K562 (cell line): ENCODE measurements at regions of chr10 and their contacts with region 1.

Region 1: GRCh38 chr10:131885391-131886161 is 15.2 kb upstream of the PPP2R2D start:
- DNase-seq: peak; percentile 76 to 84 (median 78)
- ATAC-seq: peak; percentile 100
- H3K4me3 ChIP-seq: no peak overlapping the region
- H3K27ac ChIP-seq: no peak overlapping the region
- H3K4me1 ChIP-seq: peaks cover 13 to 25% of the 10 kb centered on the region in 2 experiments
- H3K27me3 ChIP-seq: no peaks in the 10 kb centered on the region; a peak in 1 of 5 replicates
- CTCF ChIP-seq: peak; percentile 90 to 97 (median 92)
- EP300 ChIP-seq: no peak
- POLR2A ChIP-seq: no peak
- RAD21 ChIP-seq: peak; percentile 89 to 95

Region 2: GRCh38 chr10:131928248-131929095 is 42.9 kb after region 1 on chr10:
- CTCF ChIA-PET with region 1: no interaction called
- POLR2A ChIA-PET with region 1: no interaction called
- in situ Hi-C with region 1: loop called (anchors 5 kb)
- intact Hi-C with region 1: loop called (anchors 5 kb)
- DNase-seq: peak in 2 of 4 experiments; percentile 37 to 42
- ATAC-seq: peak; percentile 69
- H3K4me3 ChIP-seq: no peak overlapping the region
- H3K27ac ChIP-seq: peak overlapping the region; percentile 60; the same call in 2 of the 3 replicates
- H3K4me1 ChIP-seq: peaks cover 36 to 55% of the 10 kb centered on the region in 2 experiments; a peak in 4 of 5 replicates
- H3K27me3 ChIP-seq: no peaks in the 10 kb centered on the region; a peak in 1 of 5 replicates
- CTCF ChIP-seq: no peak
- EP300 ChIP-seq: no peak
- POLR2A ChIP-seq: no peak
- RAD21 ChIP-seq: no peak

Region 3: DNA sequence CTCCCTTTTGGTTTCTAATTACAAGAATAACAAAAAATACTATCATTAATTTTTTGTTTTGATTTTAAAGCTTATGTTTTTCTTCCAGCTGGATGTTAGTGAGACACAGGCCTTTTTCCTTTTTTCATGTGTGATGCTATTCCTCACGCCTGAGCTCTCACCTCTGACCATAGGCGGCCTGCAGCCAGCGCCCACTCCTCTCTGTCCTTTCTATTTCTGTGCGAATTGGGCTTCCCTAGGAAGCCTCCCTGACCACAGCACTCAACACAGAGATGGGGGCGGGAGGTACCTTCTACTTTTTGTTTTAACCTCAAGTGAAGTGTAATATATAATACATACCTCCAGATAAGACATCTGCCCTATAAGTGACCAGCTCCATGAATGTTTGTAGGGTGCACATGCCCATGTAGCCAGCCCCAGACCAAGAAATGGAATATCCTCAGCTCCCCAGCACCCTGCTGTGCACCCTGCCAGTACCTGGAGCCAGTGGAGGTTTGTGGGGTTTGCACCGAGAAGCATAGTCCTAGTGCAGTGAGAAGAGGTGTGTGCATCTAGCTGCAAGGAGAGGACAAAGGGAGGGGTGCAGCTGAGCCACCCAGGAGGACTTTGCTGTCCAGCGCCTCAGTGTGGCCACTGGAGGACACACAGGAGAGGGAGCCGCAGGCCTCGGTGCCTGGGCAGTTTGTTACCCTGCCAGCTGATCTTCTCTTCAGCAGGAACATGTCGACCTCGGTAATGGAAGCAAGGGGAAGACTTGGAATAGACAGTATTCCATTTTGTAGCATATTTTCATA is 57.6 kb after region 1 on chr10:
- CTCF ChIA-PET with region 1: interaction called, 5 read pairs
- POLR2A ChIA-PET with region 1: interaction called, 3 read pairs
- in situ Hi-C with region 1: no loop called
- intact Hi-C with region 1: loop called (anchors 1 kb)
- DNase-seq: peak; percentile 33 to 60 (median 50)
- ATAC-seq: peak; percentile 98
- H3K4me3 ChIP-seq: no peak overlapping the region
- H3K27ac ChIP-seq: no peak overlapping the region
- H3K4me1 ChIP-seq: no peaks in the 10 kb centered on the region
- H3K27me3 ChIP-seq: no peaks in the 10 kb centered on the region
- CTCF ChIP-seq: peak; percentile 62 to 74 (median 64)
- EP300 ChIP-seq: no peak
- POLR2A ChIP-seq: no peak
- RAD21 ChIP-seq: peak; percentile 24 to 60; a peak in 3 of 4 replicates

Region 4: DNA sequence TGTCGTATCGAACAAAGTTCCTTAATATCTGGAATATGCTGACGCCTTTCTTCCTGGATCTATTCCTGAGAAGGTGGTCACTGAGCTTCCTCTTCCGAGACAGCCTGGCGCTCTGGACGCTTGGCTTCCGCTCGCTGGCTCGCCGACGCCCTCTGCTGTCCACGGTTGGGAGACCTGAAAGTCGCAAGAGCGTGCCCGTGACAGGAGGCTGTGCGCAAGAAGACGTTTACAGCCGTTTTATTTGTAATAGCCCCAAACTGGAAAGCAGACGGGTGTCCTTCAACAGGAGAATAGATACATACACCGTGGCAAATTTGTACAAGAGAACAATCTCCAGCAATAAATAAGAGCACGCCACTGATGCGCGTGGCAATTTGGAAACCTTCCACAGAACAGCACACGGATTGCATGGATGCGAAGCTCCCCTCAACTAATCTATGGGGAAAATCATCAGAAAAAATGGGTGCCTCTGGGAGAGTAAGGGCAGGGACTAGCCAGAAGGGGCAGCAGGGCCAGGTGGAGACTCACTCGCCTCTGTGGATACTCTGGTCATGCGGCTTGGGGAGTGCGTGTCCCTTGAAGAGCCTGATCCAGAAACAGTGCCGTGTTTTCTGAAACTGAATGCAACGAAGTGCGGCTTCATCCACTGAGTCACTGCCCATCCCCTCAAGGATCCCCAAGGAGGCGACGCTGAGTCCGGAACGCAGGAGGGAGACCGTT is 137.7 kb after region 1 on chr10:
- CTCF ChIA-PET with region 1: interaction called, 16 read pairs
- POLR2A ChIA-PET with region 1: interaction called, 5 read pairs
- in situ Hi-C with region 1: loop called (anchors 5 kb)
- intact Hi-C with region 1: loop called (anchors 1 kb)
- DNase-seq: peak; percentile 72 to 84 (median 76)
- ATAC-seq: peak; percentile 96
- H3K4me3 ChIP-seq: peak overlapping the region; percentile 6; the same call in 1 of the 2 replicates
- H3K27ac ChIP-seq: no peak overlapping the region
- H3K4me1 ChIP-seq: peaks cover 7 to 22% of the 10 kb centered on the region in 2 experiments; a peak in 3 of 5 replicates
- H3K27me3 ChIP-seq: peaks cover 16 to 33% of the 10 kb centered on the region in 2 experiments; a peak in 4 of 5 replicates
- CTCF ChIP-seq: peak; percentile 81 to 89 (median 85)
- EP300 ChIP-seq: no peak
- POLR2A ChIP-seq: no peak
- RAD21 ChIP-seq: peak; percentile 76 to 90

Region 5: GRCh38 chr10:132142411-132143161 is 257.0 kb after region 1 on chr10:
- CTCF ChIA-PET with region 1: interaction called, 7 read pairs
- POLR2A ChIA-PET with region 1: no interaction called
- in situ Hi-C with region 1: no loop called
- intact Hi-C with region 1: loop called (anchors 2 kb)
- DNase-seq: peak; percentile 31 to 80 (median 74)
- ATAC-seq: peak; percentile 95
- H3K4me3 ChIP-seq: no peak overlapping the region
- H3K27ac ChIP-seq: no peak overlapping the region
- H3K4me1 ChIP-seq: peaks cover 0 to 5% of the 10 kb centered on the region in 2 experiments; a peak in 2 of 5 replicates
- H3K27me3 ChIP-seq: peaks cover 6 to 61% of the 10 kb centered on the region in 2 experiments; a peak in 4 of 5 replicates
- CTCF ChIP-seq: peak; percentile 52 to 74 (median 69)
- EP300 ChIP-seq: no peak
- POLR2A ChIP-seq: no peak
- RAD21 ChIP-seq: peak in 1 of 2 experiments; percentile 62; a peak in 2 of 4 replicates